ENCODE measurements at regions of chr4 and their contacts with region 1.

Region 1: GRCh38 chr4:76179398-76180318 is 31.5 kb upstream of the NUP54 start:
- DNase-seq: peak; percentile 87
- ATAC-seq: peak; percentile 93
- H3K4me3 Mint-ChIP-seq: no peak overlapping the region
- H3K27ac Mint-ChIP-seq: no peak overlapping the region
- H3K4me1 Mint-ChIP-seq: no peaks in the 10 kb centered on the region
- H3K27me3 Mint-ChIP-seq: no peaks in the 10 kb centered on the region

Region 2: GRCh38 chr4:75598390-75598789 is 581.3 kb before region 1 on chr4:
- CTCF ChIA-PET with region 1: no interaction called
- DNase-seq: no peak
- ATAC-seq: peak; percentile 66
- H3K4me3 Mint-ChIP-seq: no peak overlapping the region
- H3K27ac Mint-ChIP-seq: peak overlapping the region; percentile 62
- H3K4me1 Mint-ChIP-seq: peaks cover 13% of the 10 kb centered on the region
- H3K27me3 Mint-ChIP-seq: no peaks in the 10 kb centered on the region

Region 3: GRCh38 chr4:76148142-76148865 is 31.4 kb before region 1 on chr4 and contains the start of gene NUP54:
- CTCF ChIA-PET with region 1: interaction called, 19 read pairs
- DNase-seq: peak; percentile 97
- ATAC-seq: peak; percentile 99
- H3K4me3 Mint-ChIP-seq: peak within 1 kb of the TSS; percentile 97
- H3K27ac Mint-ChIP-seq: peak within 1 kb of the TSS; percentile 93
- H3K4me1 Mint-ChIP-seq: peaks cover 30% of the 10 kb centered on the region
- H3K27me3 Mint-ChIP-seq: no peaks in the 10 kb centered on the region
- total RNA-seq, gene NUP54: 46.8 to 57.5 TPM

Region 4: DNA sequence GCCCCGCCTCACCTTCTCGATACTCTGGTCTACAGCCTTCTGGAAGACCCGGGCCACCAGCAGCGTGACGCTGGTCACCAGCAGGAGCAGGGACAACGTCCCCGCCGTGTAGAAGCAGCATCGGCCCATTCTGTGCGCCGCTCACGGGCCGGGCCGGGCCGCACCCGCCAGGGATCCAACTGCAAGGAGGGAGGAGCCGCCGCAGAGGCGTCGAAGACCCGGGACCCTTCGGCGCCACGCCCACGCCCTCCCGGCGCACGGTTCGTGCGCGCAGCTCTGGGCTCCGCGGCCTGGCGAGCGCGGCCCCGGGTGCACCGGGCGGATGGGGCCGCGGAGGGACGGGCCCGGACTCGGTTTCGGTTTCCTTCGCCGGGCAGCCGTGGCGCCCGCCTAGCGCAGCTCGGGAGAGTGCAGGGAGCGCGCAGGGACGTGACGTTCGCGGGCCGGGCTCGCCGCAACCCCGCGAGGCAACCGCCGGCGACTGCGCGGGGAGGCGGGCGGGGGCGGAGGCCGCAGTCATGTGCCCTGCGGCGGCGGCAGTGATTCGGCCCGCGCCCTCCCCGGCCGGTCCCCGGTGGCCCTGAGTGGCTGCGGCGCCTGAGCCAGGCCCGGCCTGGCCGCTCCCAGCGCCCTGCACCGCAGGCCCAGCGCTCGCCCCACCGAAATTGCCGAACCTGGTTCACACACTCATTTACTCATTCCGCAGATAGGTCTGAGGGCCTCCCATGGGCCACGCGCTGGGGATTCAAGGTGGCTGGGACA is 33.9 kb after region 1 on chr4 and contains the start of gene SCARB2:
- CTCF ChIA-PET with region 1: interaction called, 11 read pairs
- DNase-seq: peak; percentile 76
- ATAC-seq: peak; percentile 84
- H3K4me3 Mint-ChIP-seq: peak within 1 kb of the TSS; percentile 79
- H3K27ac Mint-ChIP-seq: peak within 1 kb of the TSS; percentile 91
- H3K4me1 Mint-ChIP-seq: peaks cover 30% of the 10 kb centered on the region
- H3K27me3 Mint-ChIP-seq: peaks cover 5% of the 10 kb centered on the region
- total RNA-seq, gene SCARB2: 8.9 to 15.6 TPM

Region 5: GRCh38 chr4:76377911-76378310 is 198.3 kb after region 1 on chr4:
- CTCF ChIA-PET with region 1: interaction called, 119 read pairs
- DNase-seq: peak; percentile 64
- ATAC-seq: no peak
- H3K4me3 Mint-ChIP-seq: no peak overlapping the region
- H3K27ac Mint-ChIP-seq: no peak overlapping the region
- H3K4me1 Mint-ChIP-seq: no peaks in the 10 kb centered on the region
- H3K27me3 Mint-ChIP-seq: peaks cover 15% of the 10 kb centered on the region

Region 6: GRCh38 chr4:76504613-76505465 is 325.2 kb after region 1 on chr4:
- CTCF ChIA-PET with region 1: interaction called, 16 read pairs
- DNase-seq: no peak
- ATAC-seq: no peak
- H3K4me3 Mint-ChIP-seq: no peak overlapping the region
- H3K27ac Mint-ChIP-seq: no peak overlapping the region
- H3K4me1 Mint-ChIP-seq: no peaks in the 10 kb centered on the region
- H3K27me3 Mint-ChIP-seq: peaks cover 25% of the 10 kb centered on the region

Region 7: GRCh38 chr4:77126809-77127208 is 947.2 kb after region 1 on chr4:
- CTCF ChIA-PET with region 1: no interaction called
- DNase-seq: no peak
- ATAC-seq: no peak
- H3K4me3 Mint-ChIP-seq: no peak overlapping the region
- H3K27ac Mint-ChIP-seq: no peak overlapping the region
- H3K4me1 Mint-ChIP-seq: peaks cover 4% of the 10 kb centered on the region
- H3K27me3 Mint-ChIP-seq: peaks cover 20% of the 10 kb centered on the region

Measured in activated CD8-positive, alpha-beta memory T cell treated with anti-CD3 and anti-CD28 coated beads, Interleukin-2, amount 10 ng/mL, durations not matched to agents 7 days and 5 days (primary cell).